Right ventricle myocardium superior (tissue), 1 donor: ENCODE measurements at regions of chr21 and their contacts with region 1.

Region 1: DNA sequence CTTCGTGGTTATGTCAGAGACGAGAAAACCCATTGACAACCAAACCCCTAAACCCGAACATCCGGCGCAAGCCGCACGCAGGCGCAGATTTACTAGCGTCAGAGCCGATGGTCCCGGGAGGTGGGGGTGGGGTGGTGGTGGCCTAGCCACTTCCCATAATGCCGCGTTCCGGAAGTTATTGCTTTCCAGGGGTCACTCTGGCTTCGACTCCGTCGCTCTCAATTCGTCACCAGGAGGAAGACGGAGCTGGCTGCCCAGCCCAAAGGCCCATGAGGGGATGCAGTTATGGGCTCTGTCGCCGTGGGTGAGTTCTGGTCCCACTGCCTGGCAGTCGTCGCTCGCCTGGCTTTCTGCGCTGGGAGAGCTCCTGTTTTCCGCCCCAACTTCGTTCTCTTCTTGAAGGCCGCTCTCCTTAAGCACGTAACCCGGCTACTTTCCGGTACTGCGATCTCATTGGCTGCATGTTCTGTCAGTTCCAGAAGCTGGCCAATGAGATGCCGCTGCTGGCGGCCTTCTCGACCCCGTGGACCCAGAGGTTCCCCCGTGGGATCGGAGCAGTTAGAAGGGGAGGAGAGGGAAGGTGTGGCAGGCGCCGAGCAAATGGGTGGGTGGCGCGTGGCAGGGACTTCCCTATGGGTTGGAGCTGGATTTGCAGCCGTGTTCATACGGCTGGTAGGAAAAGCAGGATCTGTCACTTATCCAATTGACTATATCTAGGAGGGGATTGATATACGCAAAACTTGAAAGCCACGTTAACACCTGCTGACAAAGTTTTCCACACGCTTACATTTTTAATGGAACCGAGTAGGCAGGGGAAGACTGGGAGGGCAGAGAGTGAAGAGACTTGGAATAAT is at the start of gene USP16:
- DNase-seq: peak; percentile 96
- ATAC-seq: peak; percentile 99
- total RNA-seq, gene USP16: 29.1 TPM

Region 2: GRCh38 chr21:28992526-28993292 is 32.0 kb before region 1 on chr21 and contains the start of gene LTN1:
- intact Hi-C with region 1: loop called (anchors 2 kb)
- DNase-seq: peak; percentile 98
- ATAC-seq: peak; percentile 100
- total RNA-seq, gene LTN1: 16.1 TPM